Esophagus muscularis mucosa (tissue), 4 donors: ENCODE measurements at regions of chr15 and their contacts with region 1.

Region 1: DNA sequence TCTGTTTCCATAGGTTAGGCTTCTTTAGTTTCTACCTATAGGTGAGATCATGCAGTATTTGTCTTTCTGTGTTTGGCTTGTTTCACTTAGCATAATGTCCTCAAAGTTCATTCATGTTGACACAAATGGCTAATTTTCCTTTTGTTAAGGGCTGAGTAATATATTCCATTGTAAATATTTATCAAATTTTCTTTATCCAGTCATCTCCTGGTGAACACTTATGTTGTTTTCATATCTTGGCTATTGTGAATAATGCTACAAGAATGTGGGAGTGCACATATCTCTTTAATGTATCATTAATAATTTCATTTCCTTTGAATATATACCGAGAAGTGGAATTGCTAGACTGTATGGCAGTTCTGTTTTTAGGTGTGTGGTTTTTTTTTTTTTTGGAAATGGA is 251.0 kb upstream of the SEMA6D start:
- DNase-seq: no peak
- H3K4me3 ChIP-seq: no peak overlapping the region
- H3K27ac ChIP-seq: no peak overlapping the region
- H3K4me1 ChIP-seq: no peaks in the 10 kb centered on the region
- H3K27me3 ChIP-seq: no peaks in the 10 kb centered on the region
- CTCF ChIP-seq: no peak
- EP300 ChIP-seq: no peak
- POLR2A ChIP-seq: no peak

Region 2: GRCh38 chr15:47688573-47689086 is 222.3 kb after region 1 on chr15:
- intact Hi-C with region 1: no loop called
- DNase-seq: no peak
- H3K4me3 ChIP-seq: no peak overlapping the region
- H3K27ac ChIP-seq: no peak overlapping the region
- H3K4me1 ChIP-seq: no peaks in the 10 kb centered on the region
- H3K27me3 ChIP-seq: no peaks in the 10 kb centered on the region
- CTCF ChIP-seq: no peak
- EP300 ChIP-seq: no peak
- POLR2A ChIP-seq: no peak

Region 3: DNA sequence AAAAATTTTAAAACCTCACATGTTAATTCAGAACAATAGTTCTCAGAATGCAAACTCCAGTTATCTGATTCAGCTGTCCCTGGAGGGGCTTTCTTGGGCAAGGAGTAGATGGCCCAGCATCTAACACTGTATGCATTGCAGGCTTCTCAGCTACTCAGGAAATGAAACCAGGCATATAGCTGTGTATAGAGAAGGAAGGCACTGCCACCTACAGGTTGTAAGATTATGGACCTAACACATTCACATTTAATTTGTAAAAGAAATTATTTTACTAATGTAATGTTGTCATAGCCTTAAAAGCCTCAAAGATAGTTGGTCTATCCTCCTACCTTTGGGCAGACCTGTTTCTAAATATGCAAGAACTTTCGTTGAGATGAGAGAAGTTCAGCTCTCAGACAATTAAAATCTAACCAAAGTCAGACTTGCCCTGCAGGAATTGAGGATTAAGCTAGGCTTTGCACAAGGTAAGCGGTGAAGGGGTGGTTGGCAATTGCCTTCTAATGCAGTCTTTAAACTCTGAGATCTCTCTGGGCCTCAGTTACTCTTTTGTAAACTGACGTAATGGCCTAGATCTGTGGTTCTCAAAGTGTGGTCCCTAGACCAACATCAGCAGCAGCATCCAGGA is 521.7 kb after region 1 on chr15:
- intact Hi-C with region 1: loop called (anchors 10 kb)
- DNase-seq: no peak
- H3K4me3 ChIP-seq: no peak overlapping the region
- H3K27ac ChIP-seq: no peak overlapping the region
- H3K4me1 ChIP-seq: peaks cover 0 to 7% (median 2%) of the 10 kb centered on the region in 4 donors
- H3K27me3 ChIP-seq: no peaks in the 10 kb centered on the region
- CTCF ChIP-seq: peak; percentile 68 to 73 (median 70)
- EP300 ChIP-seq: no peak
- POLR2A ChIP-seq: no peak